HEK293 (cell line): ENCODE measurements at regions of chr9 and their contacts with region 1.

Region 1: GRCh38 chr9:128733256-128733655 is 9.3 kb upstream of the ZDHHC12 start:
- H3K4me3 ChIP-seq: no peak overlapping the region
- H3K27ac ChIP-seq: no peak overlapping the region
- H3K4me1 ChIP-seq: no peaks in the 10 kb centered on the region
- CTCF ChIP-seq: peak; percentile 95

Region 2: GRCh38 chr9:128696923-128697707 is 36.1 kb before region 1 on chr9:
- CTCF ChIA-PET with region 1: interaction called, 12 read pairs
- POLR2A ChIA-PET with region 1: no interaction called
- H3K4me3 ChIP-seq: no peak overlapping the region
- H3K27ac ChIP-seq: no peak overlapping the region
- H3K4me1 ChIP-seq: no peaks in the 10 kb centered on the region
- CTCF ChIP-seq: no peak

Region 3: DNA sequence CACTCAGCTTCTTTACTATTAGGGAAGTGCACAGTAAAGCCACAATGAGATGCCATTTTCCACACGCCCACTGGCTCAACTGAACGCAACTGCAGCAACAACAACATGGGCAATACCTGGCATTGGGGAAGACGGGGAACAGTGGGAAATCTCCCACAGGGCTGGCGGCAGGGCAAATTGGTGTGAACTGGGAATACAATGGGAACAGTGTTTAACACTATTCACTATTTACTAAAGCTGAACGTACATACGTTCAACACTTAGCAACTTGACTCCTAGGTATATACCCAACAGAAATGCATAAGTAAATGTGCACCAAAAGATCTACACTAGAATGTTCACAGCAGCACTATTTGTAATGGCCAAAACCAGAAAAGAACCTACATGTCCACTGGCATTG is 24.3 kb after region 1 on chr9:
- CTCF ChIA-PET with region 1: interaction called, 13 read pairs
- POLR2A ChIA-PET with region 1: interaction called, 5 read pairs
- H3K4me3 ChIP-seq: no peak overlapping the region
- H3K27ac ChIP-seq: no peak overlapping the region
- H3K4me1 ChIP-seq: no peaks in the 10 kb centered on the region
- CTCF ChIP-seq: no peak

Region 4: DNA sequence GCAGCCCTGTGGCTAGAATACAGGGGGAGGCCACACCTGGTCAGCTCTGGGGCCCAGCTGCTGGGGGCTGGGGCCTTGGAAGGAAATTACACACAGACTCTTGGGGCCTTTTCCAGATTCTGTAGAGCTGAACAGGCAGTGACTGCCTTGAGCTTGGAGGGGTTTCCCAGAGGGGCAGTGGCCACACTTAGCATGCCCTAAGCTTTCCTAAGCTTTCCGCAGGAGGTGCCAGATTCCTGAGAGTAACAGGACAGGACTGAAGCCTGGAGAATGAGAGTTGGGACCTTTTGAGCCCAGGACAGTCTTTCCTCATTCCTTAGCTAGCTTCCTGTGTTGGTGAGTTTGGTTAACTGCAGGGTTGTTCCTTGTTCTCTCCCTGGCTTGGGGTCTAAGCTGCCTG is 55.2 kb after region 1 on chr9:
- CTCF ChIA-PET with region 1: no interaction called
- POLR2A ChIA-PET with region 1: no interaction called
- H3K4me3 ChIP-seq: peak overlapping the region; percentile 74; the same call in 1 of the 2 replicates
- H3K27ac ChIP-seq: no peak overlapping the region
- H3K4me1 ChIP-seq: no peaks in the 10 kb centered on the region
- CTCF ChIP-seq: no peak

Region 5: GRCh38 chr9:128818099-128818838 is 85.0 kb after region 1 on chr9 and contains the start of gene ENDOG:
- CTCF ChIA-PET with region 1: interaction called, 16 read pairs
- POLR2A ChIA-PET with region 1: interaction called, 6 read pairs
- H3K4me3 ChIP-seq: peak within 1 kb of the TSS; percentile 60
- H3K27ac ChIP-seq: peak within 1 kb of the TSS; percentile 74
- H3K4me1 ChIP-seq: no peaks in the 10 kb centered on the region
- CTCF ChIP-seq: peak; percentile 99

Region 6: GRCh38 chr9:128875790-128876160 is 142.5 kb after region 1 on chr9:
- CTCF ChIA-PET with region 1: interaction called, 10 read pairs
- POLR2A ChIA-PET with region 1: no interaction called
- H3K4me3 ChIP-seq: no peak overlapping the region
- H3K27ac ChIP-seq: no peak overlapping the region
- H3K4me1 ChIP-seq: no peaks in the 10 kb centered on the region
- CTCF ChIP-seq: no peak

Region 7: GRCh38 chr9:128927731-128928411 is 194.6 kb after region 1 on chr9:
- CTCF ChIA-PET with region 1: interaction called, 41 read pairs
- POLR2A ChIA-PET with region 1: no interaction called
- H3K4me3 ChIP-seq: no peak overlapping the region
- H3K27ac ChIP-seq: no peak overlapping the region
- H3K4me1 ChIP-seq: no peaks in the 10 kb centered on the region
- CTCF ChIP-seq: peak; percentile 65